GM10248 (cell line): ENCODE measurements at regions of chr7 and their contacts with region 1.

Region 1: GRCh38 chr7:103573479-103574058 is 127.6 kb upstream of the SLC26A5 start:
- DNase-seq: peak; percentile 13
- CTCF ChIP-seq: peak; percentile 35

Region 2: DNA sequence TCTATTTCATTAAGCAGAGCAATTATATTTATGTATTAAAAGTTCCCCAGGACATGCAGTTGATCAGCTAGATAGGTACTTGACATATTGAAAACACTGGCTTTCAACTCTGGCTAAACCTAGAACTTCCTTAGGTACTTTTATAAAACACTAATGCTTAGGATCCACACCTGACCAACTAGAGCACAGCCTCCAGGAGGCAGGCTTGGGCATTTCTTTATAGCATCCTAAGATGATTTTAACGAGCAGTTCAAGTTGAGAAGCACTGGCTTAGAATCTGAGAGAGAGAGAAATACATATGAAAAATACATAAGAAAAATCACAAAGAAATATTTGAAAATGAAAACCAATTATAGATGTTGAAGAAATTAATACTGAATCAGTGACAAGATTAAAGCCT is 148.4 kb before region 1 on chr7:
- CTCF ChIA-PET with region 1: no interaction called
- POLR2A ChIA-PET with region 1: no interaction called
- DNase-seq: no peak
- CTCF ChIP-seq: no peak

Region 3: DNA sequence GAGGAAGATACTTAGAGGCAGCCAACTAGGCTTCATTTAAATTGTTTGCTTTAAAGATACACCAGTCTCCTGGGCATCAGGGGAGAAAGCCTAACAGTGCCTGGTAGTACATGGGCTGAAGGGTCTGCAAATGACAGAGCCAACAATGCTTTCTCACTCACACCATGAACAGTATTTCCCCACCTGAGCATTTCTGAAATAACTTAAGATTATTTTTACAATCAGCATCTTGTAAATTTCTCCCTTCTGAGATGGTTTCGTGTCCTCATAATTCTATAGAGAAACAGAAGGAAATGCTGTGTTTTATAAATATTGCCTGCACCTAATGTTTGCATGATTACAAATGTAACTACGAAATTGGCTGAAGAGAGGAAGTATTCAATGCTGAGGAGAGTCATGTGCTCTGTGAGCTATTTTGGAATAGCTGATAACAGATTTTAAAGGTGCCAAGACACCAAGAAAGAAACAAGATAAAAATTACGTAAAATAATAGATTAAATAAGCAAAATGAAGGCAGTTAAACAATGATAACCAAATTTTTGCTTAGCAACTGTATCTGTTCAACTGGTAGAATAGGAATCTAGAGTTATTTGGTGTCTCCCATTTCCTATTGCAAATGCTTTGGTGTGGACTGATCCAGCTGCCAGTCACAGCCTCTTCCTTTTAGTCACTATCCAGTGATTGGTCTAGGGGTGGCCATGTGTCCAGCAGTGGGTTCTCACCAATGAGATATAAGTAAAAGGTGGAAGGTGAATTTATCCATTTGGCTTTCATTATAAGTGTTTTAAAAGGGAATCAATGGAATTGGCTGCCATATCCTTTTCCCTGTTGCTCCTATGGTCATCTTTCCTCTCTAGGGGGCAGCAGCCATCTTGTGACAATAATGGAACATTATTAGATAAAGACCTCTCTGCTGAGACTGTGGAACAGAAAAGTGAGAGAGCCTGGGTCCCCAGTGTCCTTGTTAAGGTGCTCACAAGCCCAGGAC is 40.4 kb after region 1 on chr7:
- CTCF ChIA-PET with region 1: no interaction called
- POLR2A ChIA-PET with region 1: no interaction called
- DNase-seq: no peak
- CTCF ChIP-seq: no peak

Region 4: DNA sequence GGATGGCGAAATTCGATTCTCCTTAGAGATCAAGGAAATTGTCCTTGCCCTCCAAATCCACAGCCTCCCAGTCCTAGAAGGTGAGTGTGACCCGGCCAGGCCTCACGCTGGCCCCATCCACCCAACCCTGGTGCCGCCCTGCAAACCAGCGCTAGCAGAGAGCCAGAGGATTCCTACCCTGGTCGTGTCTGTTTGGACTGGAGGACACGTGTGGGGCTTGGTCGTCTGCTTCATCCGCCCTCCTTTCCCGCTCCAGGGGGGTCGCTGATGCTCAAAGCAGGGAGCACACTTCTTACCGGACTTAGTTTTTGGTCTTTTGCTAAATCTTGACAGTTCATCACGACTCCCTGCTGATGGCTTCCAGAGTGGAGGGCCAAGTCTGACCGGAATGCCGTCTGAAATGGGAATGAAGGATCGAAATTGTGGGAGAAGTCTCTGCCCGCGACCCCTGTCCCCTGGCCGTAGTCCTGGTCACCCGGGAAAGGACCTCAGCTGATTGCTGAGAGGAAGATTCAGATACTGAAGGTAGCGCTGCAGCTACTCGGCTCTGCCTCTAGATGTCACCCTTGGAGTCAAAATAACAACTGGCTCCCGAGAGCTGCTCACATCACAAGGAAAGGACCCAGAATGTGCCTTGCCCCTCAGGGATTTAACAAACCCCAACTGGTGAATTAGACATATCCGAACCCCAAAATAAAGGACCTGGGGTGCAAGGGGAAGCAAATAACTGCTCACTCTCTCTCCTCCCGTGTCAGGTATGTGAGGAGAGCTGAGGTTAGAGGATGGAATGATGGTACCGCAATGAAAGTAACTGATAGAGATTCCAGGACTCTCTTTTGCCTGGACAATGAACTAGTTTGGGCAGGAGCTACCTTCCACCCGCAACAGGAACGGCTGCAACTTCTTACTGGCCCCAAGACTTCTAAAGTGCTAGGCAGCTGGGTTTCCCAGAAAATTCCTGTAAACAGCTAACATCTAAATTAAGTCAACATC is 657.8 kb after region 1 on chr7:
- CTCF ChIA-PET with region 1: interaction called, 10 read pairs
- POLR2A ChIA-PET with region 1: no interaction called
- DNase-seq: peak; percentile 80
- CTCF ChIP-seq: peak; percentile 94